Activated CD4-positive, alpha-beta memory T cell treated with anti-CD3 and anti-CD28 coated beads, Interleukin-2, amount 10 ng/mL, durations not matched to agents 7 days and 5 days (primary cell): ENCODE measurements at regions of chr14 and their contacts with region 1.

Region 1: DNA sequence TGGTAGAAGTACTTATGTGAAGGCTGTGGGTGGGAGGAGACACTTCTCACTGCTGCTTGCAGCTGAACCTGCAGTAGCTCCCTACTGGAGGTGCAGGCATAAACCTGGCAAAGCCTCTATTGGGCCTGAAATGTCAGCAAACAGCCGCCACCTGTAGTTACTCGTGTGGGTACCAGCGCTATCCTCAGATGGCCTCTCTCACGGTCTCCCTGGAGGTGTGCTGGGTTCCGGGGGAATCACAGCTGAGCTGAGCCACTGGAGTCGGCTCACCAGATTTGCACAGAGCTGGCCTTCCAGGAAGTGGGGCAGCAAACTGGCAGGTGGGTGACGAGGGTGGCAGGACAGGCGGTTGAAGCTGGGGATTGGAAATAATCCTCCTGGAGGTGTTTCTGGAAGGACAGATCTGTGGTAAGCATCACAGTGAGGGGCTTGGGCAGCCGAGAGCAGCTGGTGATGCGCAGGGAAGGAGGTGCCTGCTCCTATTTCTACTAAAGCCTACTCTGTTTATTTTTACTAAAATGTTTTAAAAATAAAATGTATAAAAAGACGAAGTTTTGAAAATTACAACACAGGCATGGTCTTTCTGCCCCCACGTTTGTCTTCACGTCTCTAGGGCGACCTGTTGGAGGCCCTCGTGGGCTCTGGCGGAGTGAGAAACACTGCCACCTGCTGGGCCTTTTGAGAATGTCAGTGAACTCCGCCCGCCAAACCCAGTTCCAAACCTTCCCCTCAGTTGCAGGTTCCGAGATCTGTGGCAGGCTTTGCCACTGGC is 67.8 kb upstream of the PLEKHG3 start:
- DNase-seq: peak; percentile 74
- H3K4me3 Mint-ChIP-seq: no peak overlapping the region
- H3K27ac Mint-ChIP-seq: no peak overlapping the region
- H3K4me1 Mint-ChIP-seq: peaks cover 5% of the 10 kb centered on the region
- H3K27me3 Mint-ChIP-seq: peaks cover 13% of the 10 kb centered on the region

Region 2: DNA sequence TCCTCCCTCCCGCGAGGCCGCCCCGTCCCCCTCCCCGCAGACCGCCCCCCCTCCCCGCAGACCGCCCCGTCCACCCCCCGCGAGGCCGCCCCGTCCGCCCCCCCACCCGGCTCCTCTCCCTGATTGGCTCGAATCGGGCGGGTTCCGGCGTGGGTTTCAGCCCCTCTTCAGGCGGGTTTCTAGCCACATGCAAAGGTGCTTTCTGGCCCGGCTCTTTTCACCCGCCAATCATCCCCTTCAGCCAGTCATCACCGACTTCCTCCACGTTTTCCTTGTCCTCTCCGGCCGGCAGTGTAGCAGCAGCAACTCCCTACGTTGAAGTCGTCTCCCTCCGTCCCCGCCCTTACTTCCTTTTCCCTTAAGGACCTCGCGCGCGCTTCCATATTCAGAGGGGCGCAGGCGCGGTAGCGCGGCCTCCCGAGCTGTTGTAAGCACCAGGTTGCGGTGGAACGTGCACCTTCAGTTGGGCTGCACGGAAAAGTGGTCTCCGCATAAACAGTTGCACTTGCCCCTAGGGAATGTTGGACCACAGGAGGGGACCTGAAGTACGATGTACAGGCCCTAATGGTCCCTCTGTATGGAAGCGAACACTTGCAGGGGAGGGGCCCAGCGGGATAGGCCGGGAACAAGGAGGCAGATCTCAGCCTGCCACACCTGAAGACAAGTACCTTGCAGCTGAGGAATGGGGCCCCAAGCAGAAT is 297.6 kb before region 1 on chr14:
- CTCF ChIA-PET with region 1: interaction called, 34 read pairs
- POLR2A ChIA-PET with region 1: no interaction called
- DNase-seq: peak; percentile 91
- H3K4me3 Mint-ChIP-seq: peak overlapping the region; percentile 77
- H3K27ac Mint-ChIP-seq: peak overlapping the region; percentile 80
- H3K4me1 Mint-ChIP-seq: peaks cover 33% of the 10 kb centered on the region
- H3K27me3 Mint-ChIP-seq: no peaks in the 10 kb centered on the region

Region 3: GRCh38 chr14:64434528-64434927 is 201.9 kb before region 1 on chr14:
- CTCF ChIA-PET with region 1: interaction called, 11 read pairs
- POLR2A ChIA-PET with region 1: no interaction called
- DNase-seq: no peak
- H3K4me3 Mint-ChIP-seq: no peak overlapping the region
- H3K27ac Mint-ChIP-seq: no peak overlapping the region
- H3K4me1 Mint-ChIP-seq: peaks cover 18% of the 10 kb centered on the region
- H3K27me3 Mint-ChIP-seq: no peaks in the 10 kb centered on the region

Region 4: DNA sequence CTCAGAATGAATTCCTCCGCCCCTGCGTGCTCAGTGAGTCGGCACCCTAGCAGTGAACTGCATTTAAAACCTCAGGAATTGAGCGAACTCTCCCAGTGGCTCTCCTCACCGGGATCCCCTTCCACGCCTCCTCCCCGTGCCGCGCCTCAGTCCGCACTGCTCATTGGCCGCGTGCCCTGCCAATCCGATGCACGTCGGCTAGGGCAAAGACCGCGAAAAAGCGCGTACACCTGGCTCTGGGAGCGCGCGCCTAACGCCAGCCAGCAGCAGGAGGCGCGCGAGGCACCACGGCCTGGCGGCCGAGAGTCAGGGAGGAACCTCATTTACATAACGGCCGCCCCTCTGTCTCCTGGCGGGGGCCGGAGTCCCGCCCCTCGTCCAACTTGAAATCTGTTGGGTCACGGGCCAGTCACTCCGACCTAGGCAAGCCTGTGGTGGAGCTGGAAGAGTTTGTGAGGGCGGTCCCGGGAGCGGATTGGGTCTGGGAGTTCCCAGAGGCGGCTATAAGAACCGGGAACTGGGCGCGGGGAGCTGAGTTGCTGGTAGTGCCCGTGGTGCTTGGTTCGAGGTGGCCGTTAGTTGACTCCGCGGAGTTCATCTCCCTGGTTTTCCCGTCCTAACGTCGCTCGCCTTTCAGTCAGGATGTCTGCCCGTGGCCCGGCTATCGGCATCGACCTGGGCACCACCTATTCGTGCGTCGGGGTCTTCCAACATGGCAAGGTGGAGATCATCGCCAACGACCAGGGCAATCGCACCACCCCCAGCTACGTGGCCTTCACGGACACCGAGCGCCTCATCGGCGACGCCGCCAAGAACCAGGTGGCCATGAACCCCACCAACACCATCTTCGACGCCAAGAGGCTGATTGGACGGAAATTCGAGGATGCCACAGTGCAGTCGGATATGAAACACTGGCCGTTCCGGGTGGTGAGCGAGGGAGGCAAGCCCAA is 95.9 kb before region 1 on chr14 and contains the start of gene HSPA2:
- CTCF ChIA-PET with region 1: interaction called, 16 read pairs
- POLR2A ChIA-PET with region 1: no interaction called
- DNase-seq: peak; percentile 97
- H3K4me3 Mint-ChIP-seq: peak within 1 kb of the TSS; percentile 94
- H3K27ac Mint-ChIP-seq: peak within 1 kb of the TSS; percentile 91
- H3K4me1 Mint-ChIP-seq: peaks cover 36% of the 10 kb centered on the region
- H3K27me3 Mint-ChIP-seq: peaks cover 45% of the 10 kb centered on the region
- total RNA-seq, gene HSPA2: 6.8 to 7.1 TPM

Region 5: DNA sequence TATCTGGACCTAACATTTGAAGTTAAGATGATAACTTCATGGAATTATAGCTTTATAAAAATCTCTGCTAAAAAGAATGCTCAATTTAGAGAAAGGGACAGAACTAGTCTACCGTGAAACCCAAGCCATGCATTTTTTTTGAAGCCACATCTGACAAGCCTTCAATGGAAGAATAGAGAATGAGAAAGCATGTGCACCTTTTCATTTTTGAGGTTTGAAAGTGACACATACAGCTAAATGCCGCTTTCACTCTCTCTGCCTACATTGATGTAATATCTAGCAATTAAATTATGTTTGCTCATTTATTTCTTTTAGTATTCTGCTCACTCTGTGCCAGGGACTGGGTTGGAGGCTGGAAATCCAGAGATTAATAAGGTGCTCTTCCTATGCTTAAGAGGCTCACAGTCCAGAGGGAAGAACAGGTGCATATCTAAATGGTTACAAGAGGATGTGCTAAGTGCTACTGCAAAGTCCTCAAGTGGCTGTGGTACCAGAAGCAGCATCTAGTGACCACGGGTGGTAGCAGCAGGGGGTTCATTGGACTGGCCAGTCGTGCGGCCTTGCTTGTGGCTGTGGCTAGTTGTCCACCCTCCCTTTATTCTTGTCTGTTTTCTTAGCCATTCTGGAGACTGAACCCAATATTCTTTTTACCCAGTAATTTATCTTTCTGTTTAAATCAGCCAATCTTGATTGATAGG is 26.2 kb before region 1 on chr14:
- CTCF ChIA-PET with region 1: interaction called, 10 read pairs
- POLR2A ChIA-PET with region 1: no interaction called
- DNase-seq: no peak
- H3K4me3 Mint-ChIP-seq: no peak overlapping the region
- H3K27ac Mint-ChIP-seq: no peak overlapping the region
- H3K4me1 Mint-ChIP-seq: no peaks in the 10 kb centered on the region
- H3K27me3 Mint-ChIP-seq: peaks cover 13% of the 10 kb centered on the region

Region 6: GRCh38 chr14:64625475-64626269 is 10.7 kb before region 1 on chr14:
- CTCF ChIA-PET with region 1: interaction called, 19 read pairs
- POLR2A ChIA-PET with region 1: interaction called, 4 read pairs
- DNase-seq: no peak
- H3K4me3 Mint-ChIP-seq: no peak overlapping the region
- H3K27ac Mint-ChIP-seq: no peak overlapping the region
- H3K4me1 Mint-ChIP-seq: peaks cover 12% of the 10 kb centered on the region
- H3K27me3 Mint-ChIP-seq: peaks cover 13% of the 10 kb centered on the region

Region 7: GRCh38 chr14:64649383-64650075 is 13.1 kb after region 1 on chr14:
- CTCF ChIA-PET with region 1: interaction called, 10 read pairs
- POLR2A ChIA-PET with region 1: no interaction called
- DNase-seq: no peak
- H3K4me3 Mint-ChIP-seq: no peak overlapping the region
- H3K27ac Mint-ChIP-seq: no peak overlapping the region
- H3K4me1 Mint-ChIP-seq: peaks cover 9% of the 10 kb centered on the region
- H3K27me3 Mint-ChIP-seq: peaks cover 19% of the 10 kb centered on the region

Region 8: DNA sequence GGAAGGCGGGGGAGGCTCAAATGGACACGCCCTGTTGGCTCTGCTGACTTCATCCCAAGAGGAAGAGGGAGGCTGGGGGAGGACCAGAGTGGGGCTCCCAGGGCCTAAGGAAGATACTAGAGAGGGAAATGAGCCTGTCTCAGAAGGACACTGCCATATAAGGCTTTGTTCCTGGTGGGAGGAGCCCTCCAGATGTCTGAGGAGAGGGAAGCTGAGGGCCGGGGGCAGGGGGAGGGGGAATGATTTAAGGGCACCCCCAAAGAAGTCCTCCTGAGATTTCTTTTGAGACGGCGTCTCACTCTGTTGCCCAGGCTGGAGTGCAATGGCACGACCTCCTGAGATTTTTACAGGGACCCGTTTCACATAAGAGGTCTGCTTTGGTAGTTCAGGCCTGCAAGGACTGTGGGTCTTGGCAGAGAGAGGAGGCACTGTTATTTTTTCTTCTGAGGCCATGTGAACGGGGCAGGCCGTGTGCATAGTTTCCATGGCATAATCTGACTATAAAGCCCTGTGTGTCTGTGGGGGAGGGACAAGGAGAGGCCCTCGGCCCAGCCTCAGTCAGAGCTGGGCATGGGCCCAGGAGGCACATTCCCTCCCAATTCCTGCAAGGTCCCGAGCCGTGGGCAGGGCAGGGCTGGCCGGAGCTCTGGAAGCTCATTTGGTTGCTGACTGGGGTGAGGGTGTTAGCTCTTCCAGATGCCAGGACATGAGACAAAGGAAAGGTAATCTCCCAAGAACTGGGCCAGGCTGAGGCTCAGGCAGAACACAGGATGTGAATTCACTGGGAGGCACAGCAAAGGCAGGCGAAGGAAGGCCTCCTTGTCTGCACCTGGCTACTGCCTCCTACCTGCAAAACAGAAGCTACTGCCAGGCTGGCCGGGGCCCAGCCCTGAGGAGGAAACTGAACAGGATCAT is 45.7 kb after region 1 on chr14:
- CTCF ChIA-PET with region 1: no interaction called
- POLR2A ChIA-PET with region 1: no interaction called
- DNase-seq: no peak
- H3K4me3 Mint-ChIP-seq: no peak overlapping the region
- H3K27ac Mint-ChIP-seq: no peak overlapping the region
- H3K4me1 Mint-ChIP-seq: peaks cover 38% of the 10 kb centered on the region
- H3K27me3 Mint-ChIP-seq: no peaks in the 10 kb centered on the region